ENCODE measurements at regions of chr4 and their contacts with region 1.

Region 1: DNA sequence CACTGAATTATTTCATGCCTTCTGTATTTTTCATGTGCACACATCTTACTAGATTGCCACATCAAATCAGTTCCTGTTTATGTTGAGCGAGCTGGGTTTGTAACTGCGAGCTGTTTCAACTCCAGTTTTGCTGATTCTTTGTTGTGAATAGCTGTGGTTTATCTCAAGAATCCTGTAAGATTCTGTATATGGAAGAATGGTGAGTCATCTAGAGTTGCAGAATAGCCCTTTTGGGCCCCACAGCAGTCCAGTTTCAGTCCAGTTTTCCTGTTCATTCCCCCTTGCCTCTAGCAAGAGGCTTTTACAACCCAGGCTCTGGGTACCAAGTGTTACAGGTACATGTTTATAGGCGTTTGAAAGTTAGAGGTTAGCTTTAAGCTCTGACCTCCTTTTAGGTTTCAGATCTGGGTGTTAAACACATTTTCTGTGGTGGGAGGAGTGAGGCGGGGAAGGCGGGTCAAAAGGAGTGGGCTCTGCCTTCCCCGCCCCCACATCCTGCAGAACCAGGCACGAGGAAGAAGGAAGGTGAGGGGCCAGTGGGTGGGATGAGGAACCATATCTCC is 32.7 kb downstream of the TBC1D14 start:
- DNase-seq: peak; percentile 90
- H3K4me3 ChIP-seq: peak overlapping the region in 1 of 3 experiments; percentile 9
- H3K27ac ChIP-seq: peak overlapping the region; percentile 75
- H3K4me1 ChIP-seq: peaks cover 28% of the 10 kb centered on the region
- H3K27me3 ChIP-seq: no peaks in the 10 kb centered on the region
- CTCF ChIP-seq: no peak

Region 2: DNA sequence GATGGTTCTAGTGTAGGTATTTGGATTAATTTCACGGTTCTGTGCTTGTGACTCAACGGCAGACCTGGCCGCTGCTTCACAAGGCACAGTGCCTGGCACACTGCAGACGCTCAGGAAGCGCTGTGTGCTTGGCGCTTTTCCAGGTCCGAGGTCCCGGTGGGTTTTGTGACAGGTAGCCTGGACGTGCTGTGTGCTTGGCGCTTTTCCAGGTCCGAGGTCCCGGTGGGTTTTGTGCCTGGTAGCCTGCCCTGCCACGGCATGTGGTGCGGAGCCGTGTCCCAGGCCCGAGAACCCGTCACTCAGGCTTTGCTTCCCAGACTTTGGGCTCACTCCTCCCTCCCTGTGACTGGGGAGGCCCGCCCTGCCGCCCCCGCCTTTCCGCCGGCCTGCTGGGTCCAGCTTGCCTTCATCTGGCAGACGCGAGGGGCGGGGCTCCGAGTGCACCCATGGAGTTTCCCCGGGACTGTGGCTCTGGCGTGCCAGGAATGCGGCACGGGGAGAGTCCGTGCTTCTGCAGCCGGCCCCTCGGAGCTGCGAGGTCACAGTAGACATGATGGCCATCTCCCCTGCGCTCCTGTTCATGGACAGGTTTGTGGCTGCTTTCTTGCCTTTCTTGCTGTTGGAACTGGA is 11.5 kb after region 1 on chr4:
- CTCF ChIA-PET with region 1: no interaction called
- dilution Hi-C with region 1: no loop called
- in situ Hi-C with region 1: no loop called
- intact Hi-C with region 1: loop called (anchors 1 kb)
- DNase-seq: peak; percentile 92
- H3K4me3 ChIP-seq: peak overlapping the region in 2 of 3 experiments; percentile 29 to 32
- H3K27ac ChIP-seq: peak overlapping the region; percentile 54
- H3K4me1 ChIP-seq: peaks cover 33% of the 10 kb centered on the region
- H3K27me3 ChIP-seq: no peaks in the 10 kb centered on the region
- CTCF ChIP-seq: no peak

Region 3: GRCh38 chr4:7462509-7462971 is 520.2 kb after region 1 on chr4:
- CTCF ChIA-PET with region 1: no interaction called
- dilution Hi-C with region 1: no loop called
- in situ Hi-C with region 1: no loop called
- intact Hi-C with region 1: no loop called
- DNase-seq: peak; percentile 38
- H3K4me3 ChIP-seq: no peak overlapping the region
- H3K27ac ChIP-seq: no peak overlapping the region
- H3K4me1 ChIP-seq: no peaks in the 10 kb centered on the region
- H3K27me3 ChIP-seq: no peaks in the 10 kb centered on the region
- CTCF ChIP-seq: peak in 1 of 2 donors; percentile 42